ENCODE measurements at regions of chr14 and their contacts with region 1.

Region 1: GRCh38 chr14:20970983-20971704 is 15.9 kb downstream of the RNASE2 start:
- DNase-seq: peak; percentile 78
- H3K4me3 Mint-ChIP-seq: peak overlapping the region; percentile 84
- H3K27ac Mint-ChIP-seq: peak overlapping the region; percentile 27
- H3K4me1 Mint-ChIP-seq: peaks cover 16% of the 10 kb centered on the region
- H3K27me3 Mint-ChIP-seq: peaks cover 8% of the 10 kb centered on the region
- CTCF ChIP-seq: peak; percentile 75

Region 2: GRCh38 chr14:20578784-20579502 is 392.2 kb before region 1 on chr14:
- CTCF ChIA-PET with region 1: no interaction called
- POLR2A ChIA-PET with region 1: no interaction called
- intact Hi-C with region 1: no loop called
- DNase-seq: no peak
- H3K4me3 Mint-ChIP-seq: no peak overlapping the region
- H3K27ac Mint-ChIP-seq: no peak overlapping the region
- H3K4me1 Mint-ChIP-seq: no peaks in the 10 kb centered on the region
- H3K27me3 Mint-ChIP-seq: no peaks in the 10 kb centered on the region
- CTCF ChIP-seq: no peak

Region 3: GRCh38 chr14:20632682-20633428 is 338.3 kb before region 1 on chr14:
- CTCF ChIA-PET with region 1: no interaction called
- POLR2A ChIA-PET with region 1: no interaction called
- intact Hi-C with region 1: loop called (anchors 5 kb)
- DNase-seq: peak; percentile 82
- H3K4me3 Mint-ChIP-seq: peak overlapping the region; percentile 74
- H3K27ac Mint-ChIP-seq: peak overlapping the region; percentile 48
- H3K4me1 Mint-ChIP-seq: peaks cover 23% of the 10 kb centered on the region
- H3K27me3 Mint-ChIP-seq: no peaks in the 10 kb centered on the region
- CTCF ChIP-seq: no peak

Region 4: DNA sequence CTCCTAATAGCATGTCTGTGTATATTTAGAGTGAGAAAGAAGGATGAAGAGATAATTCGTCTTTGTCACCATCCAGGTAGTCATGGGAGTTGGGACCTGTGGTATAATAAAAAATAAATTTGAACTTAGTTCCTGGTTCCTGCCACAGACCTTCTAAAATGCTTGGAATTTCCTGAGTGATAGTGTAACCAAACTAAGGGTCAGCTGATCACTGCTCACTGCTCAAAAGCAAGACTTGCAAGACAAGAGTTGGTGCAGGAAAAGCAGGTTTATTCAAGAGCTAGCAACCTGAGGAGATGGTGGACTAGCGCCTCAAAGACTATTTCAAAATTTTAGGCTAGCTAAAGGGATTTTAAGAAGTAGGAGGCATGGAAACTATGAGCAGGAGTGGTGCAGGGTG is 263.5 kb before region 1 on chr14:
- CTCF ChIA-PET with region 1: interaction called, 12 read pairs
- POLR2A ChIA-PET with region 1: no interaction called
- intact Hi-C with region 1: no loop called
- DNase-seq: no peak
- H3K4me3 Mint-ChIP-seq: no peak overlapping the region
- H3K27ac Mint-ChIP-seq: no peak overlapping the region
- H3K4me1 Mint-ChIP-seq: no peaks in the 10 kb centered on the region
- H3K27me3 Mint-ChIP-seq: no peaks in the 10 kb centered on the region
- CTCF ChIP-seq: no peak

Region 5: GRCh38 chr14:20873370-20874177 is 97.6 kb before region 1 on chr14:
- CTCF ChIA-PET with region 1: interaction called, 11 read pairs
- POLR2A ChIA-PET with region 1: no interaction called
- intact Hi-C with region 1: no loop called
- DNase-seq: peak; percentile 63
- H3K4me3 Mint-ChIP-seq: no peak overlapping the region
- H3K27ac Mint-ChIP-seq: no peak overlapping the region
- H3K4me1 Mint-ChIP-seq: no peaks in the 10 kb centered on the region
- H3K27me3 Mint-ChIP-seq: peaks cover 79% of the 10 kb centered on the region
- CTCF ChIP-seq: peak; percentile 50

Region 6: DNA sequence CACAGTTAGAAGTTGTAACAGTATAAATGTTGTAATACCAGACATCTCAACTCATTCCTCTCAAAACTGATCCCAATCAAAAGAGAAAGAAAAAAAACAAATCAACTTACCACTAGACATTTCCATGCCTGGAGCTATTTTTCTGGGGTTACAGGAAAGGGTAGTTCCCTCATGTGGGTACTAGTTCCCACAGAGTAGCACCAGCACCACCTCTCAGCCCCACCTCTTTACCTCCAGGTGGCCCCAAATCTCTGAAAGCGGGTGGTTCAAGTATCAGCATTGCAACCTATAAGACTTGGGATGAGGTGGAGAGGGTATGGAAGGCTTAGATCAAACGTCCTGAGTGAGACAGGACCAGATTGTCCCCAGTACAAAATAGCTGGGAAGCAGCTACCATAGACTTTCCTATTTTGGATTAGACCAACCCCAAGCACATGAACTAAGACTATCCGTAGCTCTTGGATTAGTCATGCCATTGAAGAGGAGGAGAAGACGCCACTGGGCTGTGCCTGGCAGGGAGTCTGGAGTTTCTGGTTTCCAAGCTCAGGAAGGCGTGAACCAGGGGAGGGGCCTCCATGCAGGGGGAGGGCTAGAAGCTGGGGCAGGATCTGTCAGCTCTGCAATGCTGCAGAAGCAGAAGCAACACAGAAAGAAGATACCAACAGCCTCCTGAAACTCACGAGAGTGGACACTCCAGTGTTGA is 27.7 kb after region 1 on chr14 and contains the start of gene SLC39A2:
- CTCF ChIA-PET with region 1: interaction called, 46 read pairs
- POLR2A ChIA-PET with region 1: interaction called, 5 read pairs
- intact Hi-C with region 1: no loop called
- DNase-seq: peak; percentile 83
- H3K4me3 Mint-ChIP-seq: peak within 1 kb of the TSS; percentile 8
- H3K27ac Mint-ChIP-seq: peak within 1 kb of the TSS; percentile 73
- H3K4me1 Mint-ChIP-seq: peaks cover 18% of the 10 kb centered on the region
- H3K27me3 Mint-ChIP-seq: no peaks in the 10 kb centered on the region
- CTCF ChIP-seq: no peak
- total RNA-seq, gene SLC39A2: not detected in 2 replicates

Region 7: GRCh38 chr14:21092273-21093011 is 121.3 kb after region 1 on chr14:
- CTCF ChIA-PET with region 1: interaction called, 12 read pairs
- POLR2A ChIA-PET with region 1: no interaction called
- intact Hi-C with region 1: no loop called
- DNase-seq: peak; percentile 64
- H3K4me3 Mint-ChIP-seq: peak overlapping the region; percentile 19
- H3K27ac Mint-ChIP-seq: no peak overlapping the region
- H3K4me1 Mint-ChIP-seq: peaks cover 24% of the 10 kb centered on the region
- H3K27me3 Mint-ChIP-seq: no peaks in the 10 kb centered on the region
- CTCF ChIP-seq: peak; percentile 100